ENCODE measurements at regions of chr5 and their contacts with region 1.

Region 1: GRCh38 chr5:36151434-36152323 is at the starts of genes LMBRD2 and SKP2:
- DNase-seq: peak; percentile 95
- ATAC-seq: peak; percentile 97
- H3K4me3 ChIP-seq: peak within 1 kb of the TSS; percentile 90 to 94 (median 90)
- H3K27ac ChIP-seq: peak within 1 kb of the TSS; percentile 83
- H3K4me1 ChIP-seq: peaks cover 73% of the 10 kb centered on the region
- H3K27me3 ChIP-seq: no peaks in the 10 kb centered on the region; a peak in 1 of 5 replicates
- CTCF ChIP-seq: no peak
- EP300 ChIP-seq: peak; percentile 7 to 52; a peak in 1 of 4 replicates
- POLR2A ChIP-seq: peak; percentile 72 to 81
- RAD21 ChIP-seq: no peak
- total RNA-seq, gene LMBRD2: 1.8 and 4.7 TPM in 2 replicates
- total RNA-seq, gene SKP2: 84.1 and 121 TPM in 2 replicates

Region 2: GRCh38 chr5:34929150-34929719 is 1222.4 kb before region 1 on chr5 and contains the start of gene DNAJC21:
- CTCF ChIA-PET with region 1: no interaction called
- POLR2A ChIA-PET with region 1: no interaction called
- in situ Hi-C with region 1: no loop called
- intact Hi-C with region 1: loop called (anchors 5 kb)
- DNase-seq: peak; percentile 92
- ATAC-seq: peak; percentile 93
- H3K4me3 ChIP-seq: peak within 1 kb of the TSS; percentile 91 to 99 (median 96)
- H3K27ac ChIP-seq: peak within 1 kb of the TSS; percentile 92
- H3K4me1 ChIP-seq: peaks cover 19% of the 10 kb centered on the region
- H3K27me3 ChIP-seq: no peaks in the 10 kb centered on the region; a peak in 1 of 5 replicates
- CTCF ChIP-seq: no peak
- EP300 ChIP-seq: no peak
- POLR2A ChIP-seq: peak; percentile 49 to 59; a peak in 3 of 4 replicates
- RAD21 ChIP-seq: 0 out of 2 replicates have a peak, but pooled peaks have one; percentile 4
- total RNA-seq, gene DNAJC21: 41.6 and 46.4 TPM in 2 replicates

Region 3: DNA sequence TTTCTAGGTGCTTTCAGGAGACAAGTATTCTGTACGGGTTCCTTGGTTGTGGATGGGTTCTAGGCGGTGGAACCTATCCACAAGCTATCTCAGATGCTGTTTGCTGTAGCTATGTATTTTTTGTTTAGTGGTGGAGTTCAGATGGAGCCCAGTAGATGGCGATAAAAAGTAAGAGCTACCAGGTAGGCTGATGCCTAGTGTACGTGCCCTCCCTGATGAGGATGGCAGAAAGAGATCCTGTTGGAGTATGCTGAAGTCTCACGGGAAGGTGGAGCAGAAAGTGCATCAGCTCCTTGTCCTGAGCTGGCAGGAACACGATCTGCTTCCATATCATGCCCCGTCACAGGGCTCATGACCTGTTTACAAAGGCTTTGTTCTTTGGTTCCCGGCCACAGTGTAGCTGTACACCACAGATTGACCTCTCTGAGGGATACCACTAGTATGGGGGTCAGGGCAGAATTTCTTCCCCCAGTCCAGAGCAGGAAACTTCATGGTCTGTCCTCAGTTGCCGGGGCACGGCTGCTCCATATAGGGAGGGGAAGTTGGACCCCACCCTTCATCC is 72.4 kb before region 1 on chr5:
- CTCF ChIA-PET with region 1: no interaction called
- POLR2A ChIA-PET with region 1: no interaction called
- in situ Hi-C with region 1: no loop called
- intact Hi-C with region 1: loop called (anchors 5 kb)
- DNase-seq: peak; percentile 55
- ATAC-seq: peak; percentile 99
- H3K4me3 ChIP-seq: peak overlapping the region in 1 of 3 experiments; percentile 38; a peak in 1 of 6 replicates
- H3K27ac ChIP-seq: no peak overlapping the region
- H3K4me1 ChIP-seq: no peaks in the 10 kb centered on the region
- H3K27me3 ChIP-seq: no peaks in the 10 kb centered on the region
- CTCF ChIP-seq: peak; percentile 85
- EP300 ChIP-seq: no peak
- POLR2A ChIP-seq: no peak
- RAD21 ChIP-seq: peak; percentile 31; the same call in 1 of the 2 replicates

Region 4: GRCh38 chr5:36138900-36139683 is 12.6 kb before region 1 on chr5:
- CTCF ChIA-PET with region 1: no interaction called
- POLR2A ChIA-PET with region 1: interaction called, 49 read pairs
- in situ Hi-C with region 1: no loop called
- intact Hi-C with region 1: loop called (anchors 1 kb)
- DNase-seq: peak; percentile 78
- ATAC-seq: peak; percentile 100
- H3K4me3 ChIP-seq: peak overlapping the region; percentile 48 to 67 (median 60)
- H3K27ac ChIP-seq: peak overlapping the region; percentile 52
- H3K4me1 ChIP-seq: peaks cover 25% of the 10 kb centered on the region
- H3K27me3 ChIP-seq: no peaks in the 10 kb centered on the region
- CTCF ChIP-seq: no peak
- EP300 ChIP-seq: no peak
- POLR2A ChIP-seq: peak in 1 of 2 experiments; percentile 64; a peak in 2 of 4 replicates
- RAD21 ChIP-seq: no peak

Region 5: DNA sequence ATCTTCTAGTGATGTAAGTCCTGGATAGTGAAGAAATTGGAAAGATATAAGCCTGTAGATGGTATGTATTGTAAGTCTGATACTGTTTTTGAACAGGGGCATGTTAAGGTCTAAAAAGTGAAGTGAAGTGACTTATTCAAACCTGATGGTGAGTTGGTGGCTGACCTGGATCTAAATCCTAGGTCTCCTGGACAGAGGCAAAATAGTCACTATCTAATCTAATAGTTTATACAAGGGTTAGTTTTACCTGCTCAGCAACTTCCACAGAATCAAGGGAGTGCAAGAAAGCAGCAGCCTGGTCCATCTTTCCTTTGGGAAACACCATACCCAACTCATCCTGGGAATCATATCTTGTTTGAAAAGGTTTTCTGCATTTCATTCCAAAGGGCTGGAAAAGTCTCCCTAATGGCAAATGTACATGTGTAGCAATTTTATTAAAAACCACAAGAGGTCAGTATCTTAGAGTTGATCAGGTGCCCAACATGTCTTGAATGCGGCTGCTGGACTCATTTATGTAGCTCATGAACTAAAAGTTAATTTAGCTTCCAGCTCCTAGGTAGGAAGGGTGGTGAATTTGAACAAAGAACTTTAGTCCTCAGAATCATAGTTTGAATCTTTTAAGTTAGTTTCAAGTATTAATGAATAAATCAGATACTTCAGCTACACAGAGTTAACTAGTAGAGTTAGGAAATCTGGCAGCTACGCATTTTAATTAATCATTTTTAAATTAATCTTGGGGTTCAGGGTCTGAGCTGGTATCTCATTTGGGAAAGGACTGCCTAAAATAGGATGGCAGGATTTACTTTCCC is 26.2 kb after region 1 on chr5:
- CTCF ChIA-PET with region 1: no interaction called
- POLR2A ChIA-PET with region 1: interaction called, 16 read pairs
- in situ Hi-C with region 1: no loop called
- intact Hi-C with region 1: loop called (anchors 1 kb)
- DNase-seq: peak; percentile 48
- ATAC-seq: peak; percentile 45; the same call in 2 of the 3 replicates
- H3K4me3 ChIP-seq: no peak overlapping the region
- H3K27ac ChIP-seq: peak overlapping the region; percentile 23
- H3K4me1 ChIP-seq: peaks cover 60% of the 10 kb centered on the region
- H3K27me3 ChIP-seq: no peaks in the 10 kb centered on the region
- CTCF ChIP-seq: peak; percentile 71
- EP300 ChIP-seq: no peak
- POLR2A ChIP-seq: no peak
- RAD21 ChIP-seq: 0 out of 2 replicates have a peak, but pooled peaks have one; percentile 35

Region 6: DNA sequence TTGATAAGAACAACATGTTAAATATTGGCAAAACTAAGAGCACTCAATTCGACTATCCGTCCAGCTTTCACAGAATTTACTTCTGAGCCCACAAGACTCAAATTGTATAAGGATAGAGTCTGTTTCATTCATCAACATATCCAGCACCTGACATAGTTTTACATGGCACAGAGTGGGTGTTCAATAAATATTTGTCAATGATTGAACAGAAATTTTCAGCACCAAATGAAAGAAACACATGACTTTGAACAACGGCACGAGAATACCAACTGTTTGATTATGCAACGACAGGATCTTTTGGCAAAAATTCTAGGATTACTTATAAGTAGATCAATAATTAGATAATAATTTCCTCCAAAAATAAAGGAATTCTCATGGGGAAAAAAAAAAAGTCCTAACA is 42.1 kb after region 1 on chr5:
- CTCF ChIA-PET with region 1: no interaction called
- POLR2A ChIA-PET with region 1: no interaction called
- in situ Hi-C with region 1: no loop called
- intact Hi-C with region 1: no loop called
- DNase-seq: no peak
- ATAC-seq: no peak
- H3K4me3 ChIP-seq: no peak overlapping the region
- H3K27ac ChIP-seq: no peak overlapping the region
- H3K4me1 ChIP-seq: no peaks in the 10 kb centered on the region
- H3K27me3 ChIP-seq: no peaks in the 10 kb centered on the region
- CTCF ChIP-seq: no peak
- EP300 ChIP-seq: no peak
- POLR2A ChIP-seq: no peak
- RAD21 ChIP-seq: no peak

Region 7: GRCh38 chr5:36241631-36242533 is 90.2 kb after region 1 on chr5 and contains the start of gene NADK2:
- CTCF ChIA-PET with region 1: no interaction called
- POLR2A ChIA-PET with region 1: interaction called, 57 read pairs
- in situ Hi-C with region 1: no loop called
- intact Hi-C with region 1: loop called (anchors 2 kb)
- DNase-seq: peak; percentile 94
- ATAC-seq: peak; percentile 87
- H3K4me3 ChIP-seq: peak within 1 kb of the TSS; percentile 76 to 93 (median 88)
- H3K27ac ChIP-seq: peak within 1 kb of the TSS; percentile 95
- H3K4me1 ChIP-seq: peaks cover 50% of the 10 kb centered on the region
- H3K27me3 ChIP-seq: no peaks in the 10 kb centered on the region
- CTCF ChIP-seq: peak; percentile 78
- EP300 ChIP-seq: peak in 1 of 2 experiments; percentile 19; a peak in 1 of 4 replicates
- POLR2A ChIP-seq: peak; percentile 64 to 80
- RAD21 ChIP-seq: no peak; the same call in 1 of the 2 replicates
- total RNA-seq, gene NADK2: 71.4 and 94.9 TPM in 2 replicates

Region 8: GRCh38 chr5:36397901-36398536 is 246.3 kb after region 1 on chr5:
- CTCF ChIA-PET with region 1: no interaction called
- POLR2A ChIA-PET with region 1: no interaction called
- in situ Hi-C with region 1: no loop called
- intact Hi-C with region 1: no loop called
- DNase-seq: peak; percentile 20
- ATAC-seq: peak; percentile 52; the same call in 2 of the 3 replicates
- H3K4me3 ChIP-seq: no peak overlapping the region
- H3K27ac ChIP-seq: no peak overlapping the region
- H3K4me1 ChIP-seq: peaks cover 38% of the 10 kb centered on the region
- H3K27me3 ChIP-seq: no peaks in the 10 kb centered on the region
- CTCF ChIP-seq: peak; percentile 67
- EP300 ChIP-seq: no peak
- POLR2A ChIP-seq: no peak
- RAD21 ChIP-seq: 0 out of 2 replicates have a peak, but pooled peaks have one; percentile 29

Region 9: DNA sequence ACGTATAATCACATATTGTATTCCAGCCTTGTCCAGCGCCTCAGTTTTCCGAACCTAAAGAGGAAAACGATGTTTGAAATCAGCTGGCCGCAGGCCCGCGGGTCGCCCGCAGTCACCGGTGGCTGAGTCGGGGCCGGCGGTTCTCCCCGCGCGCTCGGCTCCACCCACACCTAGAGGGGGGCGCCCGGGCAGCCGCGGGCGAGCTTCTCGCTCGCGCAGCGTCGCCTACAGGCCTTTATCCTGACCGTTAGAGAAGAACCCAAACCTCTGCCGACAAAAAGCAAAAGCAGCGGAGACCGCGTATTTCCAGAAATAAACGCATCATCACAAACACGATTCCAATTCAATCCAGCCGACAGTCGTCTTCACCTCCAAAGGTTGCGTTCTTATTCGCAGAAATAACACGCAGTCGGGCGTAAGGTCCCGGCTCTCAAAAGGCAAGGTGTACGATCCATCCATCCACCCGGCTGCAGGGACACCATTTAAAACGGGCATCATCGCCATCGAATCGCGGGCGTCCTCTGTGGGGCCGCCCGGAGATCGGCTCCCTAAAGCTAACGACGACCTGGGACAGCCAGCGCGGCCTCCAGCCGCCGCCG is 724.2 kb after region 1 on chr5:
- CTCF ChIA-PET with region 1: no interaction called
- POLR2A ChIA-PET with region 1: interaction called, 3 read pairs
- in situ Hi-C with region 1: no loop called
- intact Hi-C with region 1: loop called (anchors 10 kb)
- DNase-seq: peak; percentile 59
- ATAC-seq: peak; percentile 86
- H3K4me3 ChIP-seq: peak overlapping the region; percentile 95 to 99 (median 99)
- H3K27ac ChIP-seq: peak overlapping the region; percentile 96
- H3K4me1 ChIP-seq: peaks cover 37% of the 10 kb centered on the region
- H3K27me3 ChIP-seq: peaks cover 0 to 3% of the 10 kb centered on the region in 2 experiments; a peak in 1 of 5 replicates
- CTCF ChIP-seq: peak; percentile 66
- EP300 ChIP-seq: no peak
- POLR2A ChIP-seq: peak in 1 of 2 experiments; percentile 9; a peak in 1 of 4 replicates
- RAD21 ChIP-seq: peak; percentile 25; the same call in 1 of the 2 replicates